ENCODE measurements at regions of chr18 and their contacts with region 1.

Region 1: DNA sequence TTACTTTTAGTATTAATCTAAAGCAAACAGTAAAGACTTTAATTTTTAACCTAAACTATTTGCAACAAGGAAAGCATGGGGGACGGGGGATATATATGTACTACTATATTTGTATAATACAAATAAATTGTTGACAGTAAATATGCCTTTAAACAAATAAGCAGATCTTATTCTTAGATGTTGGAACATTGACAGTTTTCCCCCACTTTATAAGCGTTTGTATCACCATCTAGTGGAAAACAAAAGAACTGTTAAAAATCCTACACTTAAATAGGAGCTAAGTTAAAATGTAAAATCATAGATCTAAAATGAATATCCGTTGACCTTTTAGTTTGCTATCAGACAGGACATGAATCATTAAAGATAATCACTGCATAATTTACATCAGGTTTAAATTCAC is 50.0 kb downstream of the RBBP8 start:
- DNase-seq: peak; percentile 36
- H3K4me3 ChIP-seq: no peak overlapping the region
- H3K27ac ChIP-seq: no peak overlapping the region
- H3K4me1 ChIP-seq: peaks cover 0 to 6% of the 10 kb centered on the region in 2 experiments; a peak in 1 of 4 replicates
- H3K27me3 ChIP-seq: no peaks in the 10 kb centered on the region
- CTCF ChIP-seq: peak; percentile 72
- EP300 ChIP-seq: no peak
- RAD21 ChIP-seq: peak; percentile 80

Region 2: DNA sequence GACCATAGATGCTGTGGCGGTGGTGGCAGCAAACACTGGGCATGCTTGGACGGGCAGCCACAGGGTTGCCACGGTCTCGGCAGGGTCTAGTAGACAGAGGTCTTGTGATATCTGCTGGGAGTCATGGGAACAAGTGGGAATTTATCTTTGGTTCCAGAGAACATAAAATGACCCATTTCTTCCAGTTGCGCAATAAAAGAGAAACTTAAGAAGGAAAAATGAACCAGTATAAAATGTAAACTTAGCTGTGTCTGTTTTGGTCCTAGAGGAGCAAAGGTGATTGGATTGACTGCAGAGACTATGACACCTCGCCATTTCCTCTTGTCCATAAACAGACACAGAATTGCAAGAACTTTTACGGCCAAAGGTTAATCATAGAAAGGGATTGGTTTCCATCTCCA is 182.6 kb before region 1 on chr18:
- CTCF ChIA-PET with region 1: interaction called, 30 read pairs
- POLR2A ChIA-PET with region 1: no interaction called
- DNase-seq: no peak
- H3K4me3 ChIP-seq: no peak overlapping the region
- H3K27ac ChIP-seq: no peak overlapping the region
- H3K4me1 ChIP-seq: no peaks in the 10 kb centered on the region; a peak in 2 of 4 replicates
- H3K27me3 ChIP-seq: no peaks in the 10 kb centered on the region
- CTCF ChIP-seq: no peak
- EP300 ChIP-seq: no peak
- RAD21 ChIP-seq: no peak

Region 3: DNA sequence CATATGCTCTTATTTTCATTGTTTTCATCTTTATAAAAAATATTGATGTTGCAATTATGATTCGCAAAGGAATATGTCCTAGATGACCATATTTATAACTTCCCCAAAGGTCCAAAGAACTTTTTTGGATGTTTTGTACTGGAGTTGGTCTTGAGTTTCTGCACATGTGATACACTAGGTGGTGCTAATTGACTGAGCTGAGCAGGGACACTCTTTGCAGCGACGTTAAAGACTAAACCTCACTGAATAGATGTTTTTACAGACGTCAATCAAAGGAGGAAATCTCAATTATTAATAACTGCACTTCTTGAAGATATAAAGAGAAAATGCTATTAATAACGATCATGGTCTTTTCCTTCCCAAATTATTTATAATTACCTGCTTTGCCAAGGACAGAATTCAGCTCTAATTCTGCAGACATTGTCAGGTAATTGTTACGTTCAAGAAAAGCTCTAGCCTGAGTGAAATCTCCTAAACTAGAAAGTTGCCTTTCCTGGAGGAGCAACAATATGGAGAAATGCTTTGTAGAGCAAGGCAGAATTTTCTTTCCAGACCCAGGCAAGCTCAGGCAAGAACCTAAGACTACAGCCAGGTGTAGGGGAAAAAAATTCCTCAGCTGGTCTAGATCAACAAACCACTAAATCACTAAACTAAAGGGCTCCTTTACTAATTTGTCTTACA is 169.4 kb before region 1 on chr18:
- CTCF ChIA-PET with region 1: interaction called, 69 read pairs
- POLR2A ChIA-PET with region 1: no interaction called
- DNase-seq: peak; percentile 43
- H3K4me3 ChIP-seq: no peak overlapping the region
- H3K27ac ChIP-seq: no peak overlapping the region
- H3K4me1 ChIP-seq: peaks cover 4% of the 10 kb centered on the region in 2 experiments; a peak in 2 of 4 replicates
- H3K27me3 ChIP-seq: peaks cover 12% of the 10 kb centered on the region; the same call in 1 of the 2 replicates
- CTCF ChIP-seq: peak; percentile 65
- EP300 ChIP-seq: no peak
- RAD21 ChIP-seq: peak; percentile 93

Region 4: GRCh38 chr18:22838639-22839277 is 144.4 kb before region 1 on chr18:
- CTCF ChIA-PET with region 1: interaction called, 13 read pairs
- POLR2A ChIA-PET with region 1: no interaction called
- DNase-seq: no peak
- H3K4me3 ChIP-seq: no peak overlapping the region
- H3K27ac ChIP-seq: no peak overlapping the region
- H3K4me1 ChIP-seq: no peaks in the 10 kb centered on the region; a peak in 1 of 4 replicates
- H3K27me3 ChIP-seq: no peaks in the 10 kb centered on the region
- CTCF ChIP-seq: no peak
- EP300 ChIP-seq: no peak
- RAD21 ChIP-seq: no peak

Region 5: GRCh38 chr18:22846088-22846683 is 137.0 kb before region 1 on chr18:
- CTCF ChIA-PET with region 1: interaction called, 16 read pairs
- POLR2A ChIA-PET with region 1: no interaction called
- DNase-seq: peak; percentile 35
- H3K4me3 ChIP-seq: no peak overlapping the region
- H3K27ac ChIP-seq: no peak overlapping the region; a peak in 1 of 4 replicates
- H3K4me1 ChIP-seq: peaks cover 0 to 3% of the 10 kb centered on the region in 2 experiments; a peak in 2 of 4 replicates
- H3K27me3 ChIP-seq: no peaks in the 10 kb centered on the region
- CTCF ChIP-seq: peak; percentile 58
- EP300 ChIP-seq: no peak
- RAD21 ChIP-seq: peak; percentile 67

Region 6: GRCh38 chr18:22933206-22933957 is 49.8 kb before region 1 on chr18 and contains the start of gene RBBP8:
- CTCF ChIA-PET with region 1: interaction called, 57 read pairs
- POLR2A ChIA-PET with region 1: no interaction called
- DNase-seq: peak; percentile 93
- H3K4me3 ChIP-seq: peak within 1 kb of the TSS; percentile 81 to 95
- H3K27ac ChIP-seq: peak within 1 kb of the TSS; percentile 93 to 94
- H3K4me1 ChIP-seq: peaks cover 5 to 8% of the 10 kb centered on the region in 2 experiments; a peak in 3 of 4 replicates
- H3K27me3 ChIP-seq: no peaks in the 10 kb centered on the region
- CTCF ChIP-seq: no peak
- EP300 ChIP-seq: 0 out of 4 replicates have a peak, but pooled peaks of 1 of the 2 experiments have one; percentile 19
- RAD21 ChIP-seq: no peak
- polyA plus RNA-seq, gene RBBP8: 9.6 and 11.5 TPM in 2 replicates

Region 7: GRCh38 chr18:22952525-22952924 is 30.6 kb before region 1 on chr18:
- CTCF ChIA-PET with region 1: interaction called, 10 read pairs
- POLR2A ChIA-PET with region 1: no interaction called
- DNase-seq: no peak
- H3K4me3 ChIP-seq: no peak overlapping the region
- H3K27ac ChIP-seq: no peak overlapping the region
- H3K4me1 ChIP-seq: peaks cover 0 to 6% of the 10 kb centered on the region in 2 experiments; a peak in 2 of 4 replicates
- H3K27me3 ChIP-seq: no peaks in the 10 kb centered on the region
- CTCF ChIP-seq: no peak
- EP300 ChIP-seq: no peak
- RAD21 ChIP-seq: no peak

Region 8: DNA sequence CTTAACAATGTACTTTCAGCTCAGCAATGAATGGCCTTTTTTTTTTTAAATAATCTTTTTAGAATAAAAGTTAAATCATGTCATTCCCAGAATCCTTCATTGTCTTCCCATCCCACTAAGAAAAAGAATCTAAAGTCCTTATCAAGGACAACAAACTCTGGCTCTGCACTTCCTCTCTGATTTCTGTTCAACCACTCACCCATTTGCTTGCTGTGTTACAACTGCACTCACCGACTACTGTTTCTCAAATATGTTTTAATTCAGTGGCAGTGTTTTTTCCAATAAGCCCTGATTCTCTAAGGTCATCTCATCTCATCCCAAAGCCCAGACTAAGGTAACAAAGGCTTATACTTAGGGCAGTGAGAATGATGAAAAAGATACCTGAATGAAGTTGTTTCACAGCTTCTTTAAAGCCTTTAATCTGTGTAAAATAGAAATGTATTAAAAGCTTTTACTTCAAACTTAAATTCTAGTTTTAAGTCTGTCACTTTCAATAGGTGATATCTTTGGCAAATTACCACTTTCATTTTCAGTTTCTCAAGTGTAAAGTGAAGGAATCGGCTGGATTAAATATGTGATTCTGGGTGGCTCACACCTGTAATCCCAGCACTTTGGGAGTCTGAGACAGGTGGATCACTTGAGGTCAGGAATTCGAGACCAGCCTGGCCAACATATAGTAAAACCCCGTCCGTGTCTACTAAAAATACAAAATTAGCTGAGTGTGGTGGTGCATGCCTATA is 37.5 kb after region 1 on chr18:
- CTCF ChIA-PET with region 1: no interaction called
- POLR2A ChIA-PET with region 1: no interaction called
- DNase-seq: no peak
- H3K4me3 ChIP-seq: no peak overlapping the region
- H3K27ac ChIP-seq: no peak overlapping the region
- H3K4me1 ChIP-seq: no peaks in the 10 kb centered on the region
- H3K27me3 ChIP-seq: no peaks in the 10 kb centered on the region
- CTCF ChIP-seq: no peak
- EP300 ChIP-seq: no peak
- RAD21 ChIP-seq: no peak

Measured in SK-N-SH (cell line).